ENCODE measurements at regions of chr7 and their contacts with region 1.

Region 1: GRCh38 chr7:28096713-28097112 is 83.9 kb downstream of the JAZF1 start:
- DNase-seq: peak; percentile 71

Region 2: DNA sequence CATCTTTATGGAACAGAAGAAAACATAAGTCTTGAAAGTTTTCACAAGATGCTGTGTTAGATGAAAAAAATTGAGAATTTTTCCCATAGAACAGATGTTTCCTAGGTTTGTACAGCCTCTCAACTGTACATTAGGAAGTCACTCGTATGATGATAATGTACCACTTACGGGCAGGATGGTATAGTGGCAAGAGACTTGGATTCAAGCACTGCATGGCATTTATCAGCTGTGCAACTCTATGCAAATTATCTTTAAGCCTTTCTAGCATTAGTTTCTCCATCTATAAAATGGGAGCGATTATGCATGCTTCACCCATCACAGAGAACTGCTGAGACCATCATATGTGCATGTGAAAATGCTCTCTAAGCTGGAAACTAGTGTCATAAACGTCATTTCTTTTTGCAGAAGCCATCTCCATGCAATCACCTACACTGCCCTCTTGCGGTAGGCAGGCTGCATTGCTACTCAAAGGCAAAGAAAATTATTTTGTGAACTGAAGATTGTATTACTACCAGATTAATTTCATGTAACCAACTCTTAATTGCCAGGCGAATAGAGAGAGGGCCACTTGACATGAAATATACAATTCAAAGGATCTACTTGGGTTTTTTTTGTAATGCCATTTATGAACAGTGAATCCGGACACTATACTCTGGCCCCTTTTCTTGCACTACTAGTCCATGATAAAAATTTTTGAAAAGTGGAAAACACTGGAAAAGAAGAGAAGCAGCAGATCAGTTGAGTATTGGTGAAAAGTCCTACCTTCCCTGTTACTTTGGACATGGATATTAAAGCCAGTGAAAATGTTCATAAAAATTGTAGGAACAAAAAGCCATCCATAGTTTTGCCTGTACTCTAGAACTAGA is 18.4 kb before region 1 on chr7:
- CTCF ChIA-PET with region 1: interaction called, 12 read pairs
- POLR2A ChIA-PET with region 1: no interaction called
- DNase-seq: peak; percentile 60

Measured in HEK293T (cell line).